ENCODE measurements at regions of chr5 and their contacts with region 1.

Region 1: DNA sequence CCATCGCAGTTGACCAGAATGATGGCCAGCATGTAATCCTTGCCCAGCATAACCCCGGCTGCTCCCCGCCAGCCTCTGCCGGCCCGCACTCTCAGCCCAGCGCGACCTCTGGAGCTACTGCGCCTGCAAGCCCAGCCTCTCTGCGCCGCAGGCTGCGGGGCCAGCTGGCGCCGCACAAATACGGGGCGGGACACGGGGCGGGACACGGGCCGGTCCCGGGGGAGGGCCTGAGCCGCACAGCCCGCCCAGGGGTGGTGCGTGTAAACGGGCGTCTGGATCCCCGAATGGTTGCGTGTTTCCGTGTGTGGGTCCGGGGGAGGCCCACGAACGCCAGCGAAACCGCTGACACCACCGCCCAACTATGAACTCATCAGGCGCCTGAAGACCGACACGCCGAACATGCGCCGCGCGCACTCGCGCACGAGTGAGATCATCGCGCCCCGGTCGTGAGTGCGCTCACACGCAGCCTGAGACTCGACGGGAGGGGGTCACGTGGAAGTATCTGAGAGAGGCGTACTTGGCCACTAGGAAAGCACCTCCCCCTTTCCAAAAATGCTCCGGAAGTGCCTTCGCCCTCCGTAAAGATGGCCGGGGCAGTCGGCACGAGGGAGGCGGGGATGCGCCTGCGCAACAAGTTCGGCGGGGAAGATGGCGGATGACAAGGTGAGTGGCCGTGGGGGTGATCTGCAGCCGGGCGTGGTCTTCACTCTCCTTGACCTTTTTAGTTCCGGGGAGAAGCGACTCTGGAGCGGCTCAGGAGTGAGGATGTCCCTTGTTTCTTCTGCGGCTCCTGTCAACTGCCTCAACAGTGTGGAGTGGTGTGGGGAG is at the starts of genes APBB3 and SLC35A4:
- DNase-seq: peak; percentile 97 to 100
- ATAC-seq: peak; percentile 86 to 96 (median 87)
- H3K4me3 ChIP-seq: peak within 1 kb of the TSS; percentile 89
- H3K4me3 Mint-ChIP-seq: peak within 1 kb of the TSS; percentile 99
- H3K27ac ChIP-seq: peak within 1 kb of the TSS; percentile 94
- H3K27ac Mint-ChIP-seq: peak within 1 kb of the TSS; percentile 94 to 96
- H3K4me1 ChIP-seq: peaks cover 32% of the 10 kb centered on the region
- H3K4me1 Mint-ChIP-seq: peaks cover 50 to 60% of the 10 kb centered on the region in 2 donors
- H3K27me3 ChIP-seq: no peaks in the 10 kb centered on the region
- H3K27me3 Mint-ChIP-seq: no peaks in the 10 kb centered on the region
- CTCF ChIP-seq: no peak
- total RNA-seq, gene APBB3: 44.0 to 44.9 (median 44.4) TPM
- total RNA-seq, gene SLC35A4: 63.1 to 76.1 (median 72.3) TPM

Region 2: GRCh38 chr5:139960723-139961383 is 603.6 kb before region 1 on chr5:
- intact Hi-C with region 1: no loop called
- DNase-seq: no peak
- ATAC-seq: no peak
- H3K4me3 ChIP-seq: no peak overlapping the region
- H3K4me3 Mint-ChIP-seq: no peak overlapping the region
- H3K27ac ChIP-seq: no peak overlapping the region
- H3K27ac Mint-ChIP-seq: no peak overlapping the region
- H3K4me1 ChIP-seq: no peaks in the 10 kb centered on the region
- H3K4me1 Mint-ChIP-seq: no peaks in the 10 kb centered on the region
- H3K27me3 ChIP-seq: no peaks in the 10 kb centered on the region
- H3K27me3 Mint-ChIP-seq: no peaks in the 10 kb centered on the region
- CTCF ChIP-seq: no peak

Region 3: DNA sequence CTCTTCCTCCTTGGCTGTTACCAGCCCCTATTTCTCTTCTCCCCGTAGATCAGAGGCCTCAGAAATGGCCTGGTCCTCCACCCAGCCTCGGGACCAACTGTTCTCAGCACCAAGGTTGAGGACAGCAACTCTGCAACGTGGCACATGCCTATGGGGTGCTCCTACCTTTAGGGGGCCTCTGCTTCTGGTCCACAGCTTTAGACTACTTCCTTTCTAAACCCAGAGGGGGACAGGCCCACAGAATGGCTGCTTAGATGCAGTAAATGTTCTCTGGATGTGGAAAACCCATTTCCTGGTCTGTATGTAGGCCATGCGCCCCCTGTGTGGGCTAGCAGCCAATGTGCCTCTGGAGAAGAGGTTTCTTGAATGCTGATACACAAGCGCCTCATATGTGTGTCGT is 589.7 kb before region 1 on chr5:
- intact Hi-C with region 1: no loop called
- DNase-seq: no peak
- ATAC-seq: no peak
- H3K4me3 ChIP-seq: no peak overlapping the region
- H3K4me3 Mint-ChIP-seq: no peak overlapping the region
- H3K27ac ChIP-seq: no peak overlapping the region
- H3K27ac Mint-ChIP-seq: no peak overlapping the region
- H3K4me1 ChIP-seq: no peaks in the 10 kb centered on the region
- H3K4me1 Mint-ChIP-seq: no peaks in the 10 kb centered on the region
- H3K27me3 ChIP-seq: peaks cover 2% of the 10 kb centered on the region
- H3K27me3 Mint-ChIP-seq: peaks cover 15 to 40% of the 10 kb centered on the region in 2 donors
- CTCF ChIP-seq: no peak

Region 4: GRCh38 chr5:140547508-140548299 is 16.7 kb before region 1 on chr5 and contains the start of gene EIF4EBP3:
- intact Hi-C with region 1: loop called (anchors 1 kb)
- DNase-seq: peak; percentile 89 to 95
- ATAC-seq: peak; percentile 97 to 99 (median 98)
- H3K4me3 ChIP-seq: peak within 1 kb of the TSS; percentile 60
- H3K4me3 Mint-ChIP-seq: peak within 1 kb of the TSS; percentile 86
- H3K27ac ChIP-seq: peak within 1 kb of the TSS; percentile 81
- H3K27ac Mint-ChIP-seq: peak within 1 kb of the TSS; percentile 87 to 95
- H3K4me1 ChIP-seq: peaks cover 30% of the 10 kb centered on the region
- H3K4me1 Mint-ChIP-seq: peaks cover 27 to 28% of the 10 kb centered on the region in 2 donors
- H3K27me3 ChIP-seq: no peaks in the 10 kb centered on the region
- H3K27me3 Mint-ChIP-seq: no peaks in the 10 kb centered on the region
- CTCF ChIP-seq: peak; percentile 65
- total RNA-seq, gene EIF4EBP3: 5.8 to 9.4 (median 6.0) TPM

Region 5: DNA sequence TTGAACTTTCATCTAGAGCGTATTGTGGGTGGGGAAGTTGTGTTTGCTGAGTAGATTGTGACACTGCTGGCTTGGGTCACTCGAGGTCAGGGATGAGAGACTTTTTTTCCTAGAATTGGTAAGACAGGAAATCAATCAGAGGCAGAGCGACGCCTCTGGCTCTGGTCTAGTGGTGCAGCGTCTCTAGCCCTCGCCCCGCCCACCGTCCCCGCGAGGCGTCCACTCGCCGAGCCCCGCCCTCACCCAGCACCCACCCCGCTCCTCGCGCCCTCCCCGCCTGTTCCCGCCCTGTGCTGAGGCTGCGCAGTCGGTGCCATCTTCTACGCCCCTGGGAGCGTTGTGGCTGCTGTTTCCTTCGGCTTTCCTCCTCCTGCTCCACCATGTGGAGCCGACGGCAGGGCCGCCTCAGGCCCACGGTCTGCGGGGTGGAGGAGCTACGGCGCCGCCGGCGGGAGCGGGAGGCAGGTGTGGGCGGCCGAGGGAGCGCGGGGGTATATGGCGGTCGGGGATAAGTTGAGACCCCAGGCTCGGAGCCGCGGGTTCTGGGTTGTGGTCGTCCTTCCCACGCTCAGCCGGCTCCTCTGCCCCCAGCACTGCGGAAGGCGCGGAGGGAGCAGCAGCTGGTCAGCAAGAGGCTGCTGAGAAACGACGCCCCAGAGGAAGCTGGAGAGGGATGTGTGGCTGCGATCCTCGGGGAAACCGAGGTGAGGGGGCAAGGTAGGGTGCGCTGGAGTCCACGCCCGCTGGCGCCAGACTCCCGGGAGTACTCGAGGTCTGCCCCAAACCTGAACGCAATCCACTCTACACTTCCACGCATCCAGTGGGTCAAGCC is 75.0 kb after region 1 on chr5 and contains the start of gene TMCO6:
- intact Hi-C with region 1: loop called (anchors 2 kb)
- DNase-seq: peak; percentile 94 to 98
- ATAC-seq: peak; percentile 98 to 100 (median 99)
- H3K4me3 ChIP-seq: peak within 1 kb of the TSS; percentile 65
- H3K4me3 Mint-ChIP-seq: peak within 1 kb of the TSS; percentile 92
- H3K27ac ChIP-seq: peak within 1 kb of the TSS; percentile 84
- H3K27ac Mint-ChIP-seq: peak within 1 kb of the TSS; percentile 93 to 95
- H3K4me1 ChIP-seq: peaks cover 18% of the 10 kb centered on the region
- H3K4me1 Mint-ChIP-seq: peaks cover 15 to 35% of the 10 kb centered on the region in 2 donors
- H3K27me3 ChIP-seq: no peaks in the 10 kb centered on the region
- H3K27me3 Mint-ChIP-seq: no peaks in the 10 kb centered on the region
- CTCF ChIP-seq: peak; percentile 61
- total RNA-seq, gene TMCO6: 17.9 to 19.5 (median 18.8) TPM

Region 6: DNA sequence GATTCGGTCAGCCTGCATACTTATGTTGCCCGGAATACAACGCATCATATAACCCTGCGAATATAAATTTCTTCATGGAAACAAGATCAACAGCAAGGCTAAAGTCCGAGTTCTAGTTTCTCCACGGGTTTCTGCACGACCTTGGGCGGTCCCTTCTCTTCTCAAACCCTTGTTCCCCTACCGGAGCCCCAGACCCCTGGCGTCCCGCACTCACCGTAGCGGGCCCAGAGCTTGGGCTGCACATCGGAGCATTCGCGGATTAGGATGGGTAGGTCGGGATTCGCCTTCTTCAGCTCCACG is 82.6 kb after region 1 on chr5:
- intact Hi-C with region 1: loop called (anchors 1 kb)
- DNase-seq: no peak
- ATAC-seq: no peak
- H3K4me3 ChIP-seq: peak overlapping the region; percentile 78
- H3K4me3 Mint-ChIP-seq: peak overlapping the region; percentile 100
- H3K27ac ChIP-seq: peak overlapping the region; percentile 89
- H3K27ac Mint-ChIP-seq: peak overlapping the region; percentile 94 to 99
- H3K4me1 ChIP-seq: peaks cover 20% of the 10 kb centered on the region
- H3K4me1 Mint-ChIP-seq: peaks cover 31 to 46% of the 10 kb centered on the region in 2 donors
- H3K27me3 ChIP-seq: no peaks in the 10 kb centered on the region
- H3K27me3 Mint-ChIP-seq: no peaks in the 10 kb centered on the region
- CTCF ChIP-seq: no peak

Region 7: DNA sequence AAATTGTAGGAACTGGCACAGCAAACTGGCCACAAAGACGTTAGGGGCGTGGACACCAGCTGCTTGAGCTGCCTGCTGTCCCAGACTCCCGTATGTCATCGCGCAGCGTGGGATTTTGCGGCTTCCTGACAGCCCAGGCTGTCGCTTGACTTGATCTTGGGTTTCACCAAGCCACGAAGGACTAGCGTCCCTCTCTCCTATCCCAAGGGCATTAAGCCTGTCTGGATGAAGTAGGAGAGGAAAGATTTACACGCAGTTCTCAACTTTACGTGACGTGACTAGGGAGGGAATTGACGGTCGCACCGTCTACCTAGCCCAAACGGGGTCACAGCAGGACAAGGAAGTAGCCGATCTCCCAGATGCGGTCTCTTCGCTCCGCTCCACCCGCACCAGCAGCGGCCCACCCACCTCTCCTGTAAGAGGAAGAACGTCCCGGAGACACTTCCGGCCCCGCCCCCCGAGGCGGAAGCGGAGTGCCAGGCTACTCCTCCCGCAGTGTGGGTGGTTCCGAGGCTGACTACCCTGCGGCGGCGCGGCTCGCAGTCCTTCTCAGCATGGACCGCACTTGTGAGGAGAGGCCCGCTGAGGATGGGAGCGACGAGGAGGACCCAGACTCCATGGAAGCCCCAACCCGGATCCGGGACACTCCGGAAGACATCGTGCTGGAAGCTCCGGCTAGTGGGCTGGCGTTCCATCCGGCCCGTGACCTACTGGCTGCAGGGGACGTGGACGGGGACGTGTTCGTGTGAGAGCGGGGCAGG is 100.1 kb after region 1 on chr5 and contains the start of gene WDR55:
- intact Hi-C with region 1: loop called (anchors 1 kb)
- DNase-seq: peak; percentile 86 to 97
- ATAC-seq: peak; percentile 95 to 97 (median 95)
- H3K4me3 ChIP-seq: peak within 1 kb of the TSS; percentile 99
- H3K4me3 Mint-ChIP-seq: peak within 1 kb of the TSS; percentile 99
- H3K27ac ChIP-seq: peak within 1 kb of the TSS; percentile 90
- H3K27ac Mint-ChIP-seq: peak within 1 kb of the TSS; percentile 96
- H3K4me1 ChIP-seq: peaks cover 21% of the 10 kb centered on the region
- H3K4me1 Mint-ChIP-seq: peaks cover 33 to 38% of the 10 kb centered on the region in 2 donors
- H3K27me3 ChIP-seq: no peaks in the 10 kb centered on the region
- H3K27me3 Mint-ChIP-seq: no peaks in the 10 kb centered on the region
- CTCF ChIP-seq: no peak
- total RNA-seq, gene WDR55: 42.3 to 45.1 (median 43.3) TPM

Region 8: DNA sequence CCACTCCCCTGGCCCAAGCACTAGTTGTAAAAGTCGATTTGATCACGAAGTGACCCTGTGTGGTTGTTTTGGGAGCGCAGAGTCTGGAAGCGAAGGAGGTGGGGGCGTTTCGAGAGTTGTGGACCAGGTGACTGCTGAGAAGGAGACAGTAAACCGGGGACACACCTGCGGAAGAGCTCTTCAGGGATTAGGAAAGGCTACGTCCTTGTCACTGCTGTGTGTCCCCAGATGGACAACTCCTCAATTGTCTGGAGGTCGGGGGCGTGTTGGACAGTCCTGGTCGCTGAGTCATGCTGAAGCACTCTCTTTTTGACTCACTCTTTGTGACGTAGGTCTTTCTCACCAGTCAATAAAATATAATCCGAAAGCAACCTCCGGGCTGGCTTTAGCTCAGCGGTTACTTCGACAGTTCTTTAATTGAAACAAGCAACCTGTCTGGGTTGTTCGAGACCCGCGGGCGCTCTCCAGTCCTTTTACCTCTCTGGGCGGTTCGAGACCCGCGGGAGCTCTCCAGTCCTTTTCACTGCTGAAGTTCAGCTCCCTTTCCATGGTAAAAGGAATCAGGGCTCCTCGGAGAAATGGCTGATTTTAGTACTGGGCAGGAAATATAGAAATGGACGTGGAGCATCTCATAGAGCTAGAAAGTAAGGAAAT is 146.6 kb after region 1 on chr5:
- intact Hi-C with region 1: loop called (anchors 2 kb)
- DNase-seq: peak; percentile 77 to 95
- ATAC-seq: peak; percentile 85 to 93 (median 86)
- H3K4me3 ChIP-seq: peak overlapping the region; percentile 98
- H3K4me3 Mint-ChIP-seq: peak overlapping the region; percentile 100
- H3K27ac ChIP-seq: peak overlapping the region; percentile 91
- H3K27ac Mint-ChIP-seq: peak overlapping the region; percentile 99 to 100
- H3K4me1 ChIP-seq: peaks cover 9% of the 10 kb centered on the region
- H3K4me1 Mint-ChIP-seq: peaks cover 13 to 26% of the 10 kb centered on the region in 2 donors
- H3K27me3 ChIP-seq: no peaks in the 10 kb centered on the region
- H3K27me3 Mint-ChIP-seq: peaks cover 6 to 10% of the 10 kb centered on the region in 2 donors
- CTCF ChIP-seq: no peak

Measured in natural killer cell (primary cell).